PC-9 (cell line): ENCODE measurements at regions of chrX and their contacts with region 1.

Region 1: DNA sequence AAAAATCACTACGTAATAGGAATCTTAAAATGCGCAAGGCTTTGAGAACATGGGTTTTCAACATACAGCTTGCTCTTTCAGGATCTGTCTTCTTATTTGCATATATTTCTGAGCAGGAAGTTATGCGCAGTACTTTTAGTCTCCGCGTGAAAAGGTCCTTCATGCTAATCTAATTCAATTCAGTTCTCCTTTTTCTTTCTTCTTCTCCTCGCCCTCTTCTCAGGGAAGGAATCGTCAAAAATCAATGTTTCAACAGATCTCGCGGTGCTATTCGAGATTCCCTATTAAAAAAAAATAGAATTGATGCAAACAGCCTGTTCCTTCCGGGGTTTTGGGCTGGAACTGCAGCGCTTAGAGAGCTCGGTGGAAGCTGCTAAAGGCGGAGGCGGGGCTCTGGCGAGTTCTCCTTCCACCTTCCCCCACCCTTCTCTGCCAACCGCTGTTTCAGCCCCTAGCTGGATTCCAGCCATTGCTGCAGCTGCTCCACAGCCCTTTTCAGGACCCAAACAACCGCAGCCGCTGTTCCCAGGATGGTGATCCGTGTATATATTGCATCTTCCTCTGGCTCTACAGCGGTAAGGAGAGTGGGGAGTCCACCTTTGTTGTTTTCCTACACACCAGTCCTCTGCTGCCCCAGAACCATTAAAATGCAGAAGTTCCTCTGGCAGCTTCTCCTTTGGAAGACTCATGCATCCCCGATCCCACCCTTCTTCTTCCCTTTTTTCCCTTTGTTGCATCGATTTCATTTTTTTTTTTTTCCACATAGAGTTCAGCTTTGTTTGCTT is at the starts of genes HMGN5 and SH3BGRL:
- DNase-seq: peak in 1 of 2 experiments; percentile 72
- H3K4me3 ChIP-seq: peak within 1 kb of the TSS; percentile 28; the same call in 1 of the 2 replicates
- H3K27ac ChIP-seq: no peak within 1 kb of the TSS
- H3K4me1 ChIP-seq: no peaks in the 10 kb centered on the region
- H3K27me3 ChIP-seq: no peaks in the 10 kb centered on the region
- CTCF ChIP-seq: no peak
- total RNA-seq, gene HMGN5: 3.6 and 6.6 TPM in 2 replicates
- total RNA-seq, gene SH3BGRL: 46.6 and 60.6 TPM in 2 replicates

Region 2: GRCh38 chrX:80876877-80877276 is 325.0 kb before region 1 on chrX:
- CTCF ChIA-PET with region 1: no interaction called
- POLR2A ChIA-PET with region 1: no interaction called
- intact Hi-C with region 1: loop called (anchors 10 kb)
- DNase-seq: no peak
- H3K4me3 ChIP-seq: no peak overlapping the region
- H3K27ac ChIP-seq: no peak overlapping the region
- H3K4me1 ChIP-seq: no peaks in the 10 kb centered on the region
- H3K27me3 ChIP-seq: no peaks in the 10 kb centered on the region
- CTCF ChIP-seq: peak; percentile 70

Region 3: GRCh38 chrX:81259714-81260395 is 58.0 kb after region 1 on chrX:
- CTCF ChIA-PET with region 1: no interaction called
- POLR2A ChIA-PET with region 1: no interaction called
- intact Hi-C with region 1: loop called (anchors 2 kb)
- DNase-seq: no peak
- H3K4me3 ChIP-seq: no peak overlapping the region
- H3K27ac ChIP-seq: no peak overlapping the region
- H3K4me1 ChIP-seq: no peaks in the 10 kb centered on the region
- H3K27me3 ChIP-seq: no peaks in the 10 kb centered on the region
- CTCF ChIP-seq: no peak

Region 4: GRCh38 chrX:81336455-81337152 is 134.7 kb after region 1 on chrX:
- CTCF ChIA-PET with region 1: no interaction called
- POLR2A ChIA-PET with region 1: no interaction called
- intact Hi-C with region 1: loop called (anchors 10 kb)
- DNase-seq: no peak
- H3K4me3 ChIP-seq: no peak overlapping the region
- H3K27ac ChIP-seq: no peak overlapping the region
- H3K4me1 ChIP-seq: no peaks in the 10 kb centered on the region
- H3K27me3 ChIP-seq: no peaks in the 10 kb centered on the region
- CTCF ChIP-seq: no peak

Region 5: GRCh38 chrX:81729269-81729777 is 527.5 kb after region 1 on chrX:
- CTCF ChIA-PET with region 1: no interaction called
- POLR2A ChIA-PET with region 1: no interaction called
- intact Hi-C with region 1: no loop called
- DNase-seq: no peak
- H3K4me3 ChIP-seq: no peak overlapping the region
- H3K27ac ChIP-seq: no peak overlapping the region
- H3K4me1 ChIP-seq: no peaks in the 10 kb centered on the region
- H3K27me3 ChIP-seq: no peaks in the 10 kb centered on the region
- CTCF ChIP-seq: no peak